ENCODE measurements at regions of chr3 and their contacts with region 1.

Region 1: GRCh38 chr3:173773800-173774199 is 376.3 kb downstream of the NLGN1 start:
- DNase-seq: no peak
- H3K4me3 ChIP-seq: no peak overlapping the region
- H3K27ac ChIP-seq: no peak overlapping the region
- H3K4me1 ChIP-seq: no peaks in the 10 kb centered on the region
- H3K27me3 ChIP-seq: no peaks in the 10 kb centered on the region
- CTCF ChIP-seq: no peak

Region 2: DNA sequence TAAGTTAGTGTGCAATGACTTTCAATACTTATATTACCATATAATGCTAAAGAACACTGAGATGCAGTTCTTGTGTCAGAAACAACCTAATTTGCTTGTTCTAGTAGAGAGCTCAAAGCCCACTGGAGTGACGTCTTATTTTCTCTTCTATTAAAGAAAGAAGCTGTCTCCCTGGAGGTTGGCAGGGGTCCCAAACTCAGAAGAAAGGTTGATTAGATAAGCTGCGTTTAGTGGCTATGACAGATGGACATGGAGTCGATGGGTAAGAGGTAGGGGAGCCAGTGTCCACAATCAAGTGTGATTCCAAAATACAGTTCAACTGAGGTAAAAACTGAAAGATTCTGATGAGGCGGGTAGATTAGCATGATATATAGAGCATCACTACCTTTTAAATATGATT is 12.6 kb before region 1 on chr3:
- CTCF ChIA-PET with region 1: no interaction called
- POLR2A ChIA-PET with region 1: interaction called, 10 read pairs
- intact Hi-C with region 1: no loop called
- DNase-seq: no peak
- H3K4me3 ChIP-seq: no peak overlapping the region
- H3K27ac ChIP-seq: no peak overlapping the region
- H3K4me1 ChIP-seq: no peaks in the 10 kb centered on the region
- H3K27me3 ChIP-seq: no peaks in the 10 kb centered on the region
- CTCF ChIP-seq: no peak

Measured in PC-9 (cell line).